MCF 10A (cell line): ENCODE measurements at regions of chr17 and their contacts with region 1.

Region 1: DNA sequence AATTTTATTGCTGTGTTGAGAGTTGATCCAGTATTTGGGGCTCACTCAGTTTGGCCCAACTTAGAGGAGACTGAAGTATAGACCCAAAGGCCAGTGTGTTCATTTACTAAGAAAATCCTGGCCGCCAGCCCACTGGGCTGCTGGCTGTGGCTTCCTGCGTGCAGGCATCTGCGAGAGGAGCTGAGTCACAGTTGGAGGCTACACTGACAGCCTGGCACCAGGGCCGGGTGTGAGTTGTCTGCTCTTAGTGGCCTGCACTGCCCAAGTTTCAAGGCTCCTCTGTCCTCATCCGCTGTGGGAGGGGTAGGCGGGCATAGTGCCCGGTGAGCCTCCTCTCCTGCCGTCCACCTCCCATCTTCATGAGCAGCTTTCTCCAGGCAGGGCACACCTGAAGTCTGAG is 54.2 kb downstream of the PLD6 start:
- DNase-seq: peak; percentile 95
- H3K4me3 Mint-ChIP-seq: no peak overlapping the region
- H3K27ac Mint-ChIP-seq: peak overlapping the region; percentile 75
- H3K4me1 Mint-ChIP-seq: peaks cover 33% of the 10 kb centered on the region
- H3K27me3 Mint-ChIP-seq: no peaks in the 10 kb centered on the region
- CTCF ChIP-seq: no peak

Region 2: DNA sequence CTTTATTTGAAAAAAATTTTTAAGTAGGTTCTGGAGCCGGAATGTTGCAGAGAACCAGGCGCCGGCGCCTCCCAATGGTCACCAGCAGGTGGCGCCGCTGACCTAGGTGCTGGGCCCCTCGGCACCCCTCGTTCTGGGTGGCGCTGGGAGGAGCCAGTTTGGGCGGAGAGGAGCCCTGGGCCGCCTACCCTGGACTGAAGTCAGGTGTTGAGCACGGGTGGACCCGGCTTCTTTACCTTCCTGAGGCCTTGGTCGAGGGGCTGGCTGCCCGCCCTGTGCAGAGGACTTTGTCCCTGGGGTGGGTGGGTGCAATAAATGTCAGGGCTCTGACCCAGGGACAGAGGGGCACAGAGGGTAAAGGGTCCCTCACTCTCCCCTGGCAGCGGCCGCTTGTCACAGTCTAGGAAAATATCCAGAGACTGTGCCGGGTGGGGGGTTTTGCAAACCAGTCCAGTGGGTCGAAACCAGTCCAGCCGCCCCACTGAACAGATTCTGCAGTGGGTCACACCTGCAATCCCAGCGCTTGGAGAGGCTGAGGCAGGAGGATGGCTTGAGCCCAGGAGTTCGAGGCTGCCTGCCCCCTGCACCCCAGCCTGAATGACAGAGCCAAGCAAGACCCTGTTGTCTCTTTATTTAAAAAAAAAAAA is 150.0 kb before region 1 on chr17:
- CTCF ChIA-PET with region 1: interaction called, 6 read pairs
- POLR2A ChIA-PET with region 1: no interaction called
- intact Hi-C with region 1: loop called (anchors 10 kb)
- DNase-seq: peak; percentile 80
- H3K4me3 Mint-ChIP-seq: no peak overlapping the region
- H3K27ac Mint-ChIP-seq: no peak overlapping the region
- H3K4me1 Mint-ChIP-seq: no peaks in the 10 kb centered on the region
- H3K27me3 Mint-ChIP-seq: no peaks in the 10 kb centered on the region
- CTCF ChIP-seq: peak; percentile 97

Region 3: GRCh38 chr17:17098426-17099179 is 53.4 kb before region 1 on chr17:
- CTCF ChIA-PET with region 1: no interaction called
- POLR2A ChIA-PET with region 1: no interaction called
- intact Hi-C with region 1: no loop called
- DNase-seq: peak; percentile 13
- H3K4me3 Mint-ChIP-seq: no peak overlapping the region
- H3K27ac Mint-ChIP-seq: peak overlapping the region; percentile 59
- H3K4me1 Mint-ChIP-seq: peaks cover 28% of the 10 kb centered on the region
- H3K27me3 Mint-ChIP-seq: no peaks in the 10 kb centered on the region
- CTCF ChIP-seq: no peak

Region 4: DNA sequence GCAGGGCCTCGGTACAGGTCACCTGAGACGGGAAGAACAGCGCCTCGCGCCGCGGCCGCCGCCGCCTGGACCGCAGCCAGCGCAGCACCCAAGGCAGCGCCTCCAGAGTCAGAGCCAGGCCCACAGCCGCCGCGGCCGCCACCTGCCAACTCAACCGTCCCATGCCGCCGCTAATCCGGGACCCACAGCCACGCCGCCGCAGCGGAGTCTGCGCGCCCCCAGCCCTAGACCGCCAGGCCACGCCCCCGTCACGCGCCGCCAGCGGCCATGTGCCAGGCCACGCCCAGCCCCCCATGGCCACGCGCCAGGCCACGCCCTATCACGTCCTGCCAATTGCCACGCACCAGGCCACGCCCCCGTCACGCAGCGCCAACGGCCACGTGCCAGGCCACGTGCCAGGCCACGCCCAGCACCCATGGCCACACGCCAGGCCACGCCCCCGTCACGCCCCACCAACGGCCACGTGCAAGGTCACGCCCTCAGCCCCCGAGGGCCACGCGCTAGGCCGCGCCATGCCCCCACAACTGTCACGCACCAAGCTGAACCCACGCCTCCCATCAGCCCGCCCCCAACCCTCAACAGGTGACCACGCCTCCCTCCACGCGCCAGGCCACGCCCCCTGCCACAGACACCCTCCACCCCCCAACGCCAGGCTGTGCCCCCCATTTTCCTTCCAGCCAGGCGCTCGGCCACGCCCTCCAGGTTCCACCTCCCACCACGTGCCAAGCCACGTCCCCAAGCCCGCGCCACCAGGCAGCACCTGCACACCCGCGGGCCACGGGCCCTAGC is 54.4 kb after region 1 on chr17 and contains the start of gene PLD6:
- CTCF ChIA-PET with region 1: no interaction called
- POLR2A ChIA-PET with region 1: interaction called, 3 read pairs
- intact Hi-C with region 1: loop called (anchors 1 kb)
- DNase-seq: peak; percentile 73
- H3K4me3 Mint-ChIP-seq: peak within 1 kb of the TSS; percentile 78
- H3K27ac Mint-ChIP-seq: peak within 1 kb of the TSS; percentile 67
- H3K4me1 Mint-ChIP-seq: peaks cover 19% of the 10 kb centered on the region
- H3K27me3 Mint-ChIP-seq: no peaks in the 10 kb centered on the region
- CTCF ChIP-seq: no peak
- total RNA-seq, gene PLD6: 5.5 and 9.2 TPM in 2 replicates